ENCODE measurements at regions of chr11 and their contacts with region 1.

Region 1: DNA sequence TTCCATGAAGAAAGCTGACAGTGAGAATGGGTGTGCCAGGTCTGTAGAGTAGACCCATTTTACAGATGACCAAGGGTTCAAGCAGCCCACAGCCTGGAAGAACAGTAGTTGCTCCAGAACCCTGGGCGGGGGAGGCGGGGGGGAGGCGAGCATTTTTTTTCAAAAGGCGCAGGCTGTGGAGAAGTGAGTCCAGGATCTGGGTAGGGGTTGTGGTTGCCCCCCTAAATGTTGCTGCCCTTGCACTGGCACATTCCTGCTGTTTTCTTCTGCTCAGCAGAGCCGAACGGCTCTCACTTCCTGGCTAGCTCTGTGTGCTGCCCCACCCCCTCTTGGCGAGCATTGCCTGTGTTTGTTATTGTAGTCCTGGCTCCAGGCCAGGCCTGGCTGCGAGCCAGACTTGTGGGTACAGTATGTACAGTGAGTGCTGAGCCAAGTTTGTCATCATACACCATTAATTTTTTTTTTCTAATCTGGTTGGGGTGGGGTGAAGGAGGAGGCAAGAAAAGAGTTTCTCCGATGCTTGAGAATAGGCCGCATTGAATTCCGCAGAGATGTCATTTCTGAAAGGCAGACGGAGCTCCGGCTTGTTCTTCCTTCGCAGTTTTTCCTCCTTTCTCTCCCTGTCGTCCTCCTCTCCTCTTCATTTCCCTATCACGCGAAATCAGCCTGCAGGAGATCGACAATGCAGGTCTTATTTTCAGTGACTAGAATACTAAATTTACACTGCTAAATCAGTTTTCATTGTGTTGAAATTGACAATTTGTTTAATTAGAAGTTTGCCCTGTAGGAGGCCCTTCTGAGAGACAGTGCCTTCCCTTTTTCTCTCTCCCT is 100.5 kb downstream of the ZBTB16 start:
- DNase-seq: peak; percentile 99
- H3K4me3 ChIP-seq: peak overlapping the region in 1 of 3 experiments; percentile 6
- H3K27ac ChIP-seq: peak overlapping the region; percentile 91
- H3K4me1 ChIP-seq: peaks cover 54% of the 10 kb centered on the region
- H3K27me3 ChIP-seq: no peaks in the 10 kb centered on the region
- CTCF ChIP-seq: no peak
- POLR2A ChIP-seq: peak; percentile 73

Region 2: DNA sequence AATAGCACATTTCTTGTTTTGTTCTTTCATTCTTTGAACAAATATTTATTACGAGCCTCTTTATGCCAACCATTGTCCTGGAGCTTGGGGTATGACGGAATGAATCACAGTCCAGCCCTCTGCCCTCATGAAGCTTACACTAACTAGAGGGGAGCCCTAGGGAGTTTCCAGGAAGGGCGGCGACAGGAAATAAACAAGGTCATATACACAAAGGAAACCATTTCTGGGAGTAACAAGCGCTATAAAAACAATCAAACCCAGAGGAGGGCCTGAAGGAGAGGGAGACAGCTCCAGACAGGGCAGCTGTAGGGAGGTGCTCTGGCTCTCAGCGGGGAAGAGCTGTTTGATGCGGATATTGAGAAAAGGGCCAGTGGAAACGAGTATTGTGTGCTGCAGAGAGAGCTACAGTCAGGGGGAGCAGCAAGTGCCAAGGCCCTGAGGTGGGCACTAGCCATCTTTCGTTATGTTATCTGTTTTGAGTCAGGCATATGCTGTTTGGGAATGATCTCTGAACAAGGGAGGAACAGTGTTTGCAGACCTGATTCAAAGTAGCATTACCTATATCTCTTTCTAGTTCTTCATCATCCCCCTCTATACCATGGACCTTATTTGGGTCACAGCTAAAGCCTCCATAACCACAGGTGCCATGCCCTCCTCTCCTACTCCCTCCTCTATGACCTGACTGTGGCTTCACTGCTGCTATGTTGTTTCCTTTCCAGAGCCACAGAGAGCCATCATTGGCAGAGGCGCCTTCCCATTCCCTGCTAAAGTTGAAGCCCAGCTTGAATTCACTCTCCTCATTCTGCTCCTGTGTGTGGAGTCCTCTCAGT is 115.8 kb before region 1 on chr11:
- CTCF ChIA-PET with region 1: no interaction called
- POLR2A ChIA-PET with region 1: interaction called, 3 read pairs
- dilution Hi-C with region 1: no loop called
- intact Hi-C with region 1: loop called (anchors 1 kb)
- DNase-seq: peak; percentile 85
- H3K4me3 ChIP-seq: no peak overlapping the region
- H3K27ac ChIP-seq: peak overlapping the region; percentile 81
- H3K4me1 ChIP-seq: peaks cover 22% of the 10 kb centered on the region
- H3K27me3 ChIP-seq: no peaks in the 10 kb centered on the region
- CTCF ChIP-seq: no peak
- POLR2A ChIP-seq: peak; percentile 19

Region 3: DNA sequence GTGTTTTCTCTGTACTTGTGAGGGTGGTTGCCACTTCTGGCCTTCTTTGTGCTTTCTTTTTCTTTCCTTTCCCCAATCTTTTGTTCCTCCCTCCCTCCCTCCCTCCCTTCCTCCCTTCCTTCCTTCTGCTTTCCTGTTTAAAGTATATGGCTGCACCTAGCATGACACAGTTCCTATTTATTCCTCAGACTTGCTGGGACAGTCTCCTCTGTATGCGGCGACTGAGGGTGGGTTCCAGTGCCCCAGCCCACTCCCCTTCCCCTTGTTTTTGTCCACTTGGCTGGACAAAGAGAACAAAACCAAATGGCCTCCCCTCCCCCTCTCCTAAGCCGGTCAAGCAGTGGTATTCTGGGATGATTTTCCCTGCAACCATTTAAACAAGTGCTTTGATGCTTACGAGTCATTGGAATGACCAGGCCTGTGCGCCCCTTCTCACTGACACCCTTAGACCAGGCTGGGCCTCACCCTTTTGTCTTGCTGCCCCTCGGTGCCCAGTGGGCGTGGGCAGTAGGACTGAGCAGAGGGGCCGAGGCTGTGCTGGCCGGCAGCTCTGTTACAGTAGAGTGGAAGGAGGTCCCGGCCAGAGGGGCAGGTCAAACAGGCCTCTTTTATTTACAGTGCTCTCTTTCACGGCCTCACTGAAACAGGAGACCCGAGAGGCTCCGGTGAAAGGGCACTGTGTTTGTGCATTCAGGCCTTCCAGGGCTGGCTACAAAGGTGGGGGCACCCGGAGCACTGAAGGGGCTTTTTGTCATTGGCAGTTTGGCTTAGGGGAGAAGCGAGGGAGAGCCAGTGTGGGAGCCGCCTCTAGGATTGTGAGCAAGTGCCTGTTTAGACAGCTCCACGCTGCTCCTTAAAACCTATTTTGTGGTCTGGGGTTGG is 68.3 kb before region 1 on chr11:
- CTCF ChIA-PET with region 1: no interaction called
- POLR2A ChIA-PET with region 1: no interaction called
- dilution Hi-C with region 1: no loop called
- intact Hi-C with region 1: loop called (anchors 1 kb)
- DNase-seq: peak; percentile 41
- H3K4me3 ChIP-seq: no peak overlapping the region
- H3K27ac ChIP-seq: peak overlapping the region; percentile 62
- H3K4me1 ChIP-seq: peaks cover 29% of the 10 kb centered on the region
- H3K27me3 ChIP-seq: no peaks in the 10 kb centered on the region
- CTCF ChIP-seq: no peak
- POLR2A ChIP-seq: no peak

Region 4: DNA sequence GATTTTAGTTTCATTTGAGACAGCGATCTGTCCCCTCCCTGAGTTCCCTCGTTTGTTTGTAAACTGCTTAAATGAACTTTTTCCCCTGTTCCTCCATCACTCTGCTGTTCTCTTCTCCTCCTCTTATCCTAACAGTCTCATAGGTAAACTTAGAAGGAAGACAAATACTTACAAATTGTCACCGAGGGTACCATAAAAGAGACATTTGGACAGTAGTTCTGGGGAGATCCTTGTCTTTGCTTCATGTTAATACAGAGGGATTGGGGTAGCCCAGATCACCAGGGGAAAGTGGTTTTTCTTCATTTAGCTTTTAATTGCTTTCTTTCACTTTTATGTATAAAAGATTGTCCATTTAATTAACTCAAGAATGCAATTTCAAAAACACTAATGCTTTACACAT is 54.4 kb before region 1 on chr11:
- CTCF ChIA-PET with region 1: no interaction called
- POLR2A ChIA-PET with region 1: no interaction called
- dilution Hi-C with region 1: no loop called
- intact Hi-C with region 1: no loop called
- DNase-seq: no peak
- H3K4me3 ChIP-seq: no peak overlapping the region
- H3K27ac ChIP-seq: no peak overlapping the region
- H3K4me1 ChIP-seq: peaks cover 3% of the 10 kb centered on the region
- H3K27me3 ChIP-seq: peaks cover 0 to 2% of the 10 kb centered on the region in 2 experiments
- CTCF ChIP-seq: no peak
- POLR2A ChIP-seq: no peak

Region 5: GRCh38 chr11:114149689-114150407 is 10.2 kb before region 1 on chr11:
- CTCF ChIA-PET with region 1: interaction called, 5 read pairs
- POLR2A ChIA-PET with region 1: interaction called, 3 read pairs
- dilution Hi-C with region 1: no loop called
- intact Hi-C with region 1: loop called (anchors 1 kb)
- DNase-seq: no peak
- H3K4me3 ChIP-seq: no peak overlapping the region
- H3K27ac ChIP-seq: no peak overlapping the region
- H3K4me1 ChIP-seq: peaks cover 7% of the 10 kb centered on the region
- H3K27me3 ChIP-seq: no peaks in the 10 kb centered on the region
- CTCF ChIP-seq: no peak
- POLR2A ChIP-seq: no peak

Region 6: DNA sequence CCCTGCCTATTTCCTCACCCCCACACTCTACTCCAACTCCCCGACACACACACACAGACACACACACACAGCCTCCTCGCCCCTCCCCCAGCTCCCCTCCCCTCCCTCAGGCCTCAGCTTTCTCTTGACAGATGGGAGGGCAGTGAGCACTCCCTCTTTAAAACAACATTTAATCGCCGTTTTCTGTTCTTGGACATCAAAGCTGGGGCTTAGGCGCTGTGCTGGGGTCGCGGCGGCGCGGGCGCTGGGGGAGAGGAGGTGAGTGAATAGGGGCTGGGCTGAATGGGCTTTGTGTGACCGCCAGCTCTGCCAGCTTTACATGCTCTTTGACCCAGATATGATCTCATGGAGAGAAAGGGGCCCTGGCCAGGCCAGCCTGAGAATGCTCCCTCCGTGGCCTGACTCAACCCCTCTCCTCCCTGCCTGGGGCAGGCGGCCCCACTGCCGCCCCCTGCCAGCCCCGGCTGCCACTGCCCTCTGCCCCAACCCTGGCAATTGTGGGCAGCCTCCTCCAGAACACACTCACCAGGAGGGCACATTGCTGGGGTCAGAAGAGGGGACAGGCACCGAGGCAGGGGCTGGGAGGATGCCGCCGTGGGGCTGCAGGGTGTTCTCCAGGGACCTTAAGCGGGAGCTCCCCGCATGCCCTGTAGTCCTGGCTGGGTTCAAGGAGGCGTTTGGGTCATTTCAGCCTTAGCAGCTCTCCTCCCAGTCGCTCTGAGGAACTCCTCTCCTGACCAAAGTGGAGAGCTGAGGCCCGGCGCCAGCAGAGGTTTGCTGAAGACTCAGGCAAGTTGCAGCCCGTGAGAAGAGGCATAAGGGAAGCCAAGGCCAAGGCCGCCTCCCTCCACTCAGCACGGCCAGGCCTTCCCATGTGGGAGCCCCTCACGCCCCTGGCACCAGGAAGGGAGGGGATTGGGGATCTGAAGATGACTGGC is 97.9 kb after region 1 on chr11:
- CTCF ChIA-PET with region 1: interaction called, 16 read pairs
- POLR2A ChIA-PET with region 1: no interaction called
- dilution Hi-C with region 1: no loop called
- intact Hi-C with region 1: loop called (anchors 1 kb)
- DNase-seq: peak; percentile 42
- H3K4me3 ChIP-seq: no peak overlapping the region
- H3K27ac ChIP-seq: no peak overlapping the region
- H3K4me1 ChIP-seq: no peaks in the 10 kb centered on the region
- H3K27me3 ChIP-seq: no peaks in the 10 kb centered on the region
- CTCF ChIP-seq: peak; percentile 36 to 56
- POLR2A ChIP-seq: no peak